B cell (primary cell): ENCODE measurements at regions of chr12 and their contacts with region 1.

Region 1: GRCh38 chr12:591167-592023 is 71.8 kb downstream of the NINJ2 start:
- DNase-seq: no peak
- ATAC-seq: peak; percentile 57
- H3K4me3 ChIP-seq: no peak overlapping the region
- H3K4me3 Mint-ChIP-seq: no peak overlapping the region
- H3K27ac ChIP-seq: no peak overlapping the region
- H3K27ac Mint-ChIP-seq: peak overlapping the region; percentile 4
- H3K4me1 ChIP-seq: peaks cover 5 to 16% of the 10 kb centered on the region in 2 donors
- H3K4me1 Mint-ChIP-seq: peaks cover 16% of the 10 kb centered on the region
- H3K27me3 ChIP-seq: peaks cover 0 to 5% (median 0%) of the 10 kb centered on the region in 4 experiments
- H3K27me3 Mint-ChIP-seq: no peaks in the 10 kb centered on the region
- CTCF ChIP-seq: no peak

Region 2: DNA sequence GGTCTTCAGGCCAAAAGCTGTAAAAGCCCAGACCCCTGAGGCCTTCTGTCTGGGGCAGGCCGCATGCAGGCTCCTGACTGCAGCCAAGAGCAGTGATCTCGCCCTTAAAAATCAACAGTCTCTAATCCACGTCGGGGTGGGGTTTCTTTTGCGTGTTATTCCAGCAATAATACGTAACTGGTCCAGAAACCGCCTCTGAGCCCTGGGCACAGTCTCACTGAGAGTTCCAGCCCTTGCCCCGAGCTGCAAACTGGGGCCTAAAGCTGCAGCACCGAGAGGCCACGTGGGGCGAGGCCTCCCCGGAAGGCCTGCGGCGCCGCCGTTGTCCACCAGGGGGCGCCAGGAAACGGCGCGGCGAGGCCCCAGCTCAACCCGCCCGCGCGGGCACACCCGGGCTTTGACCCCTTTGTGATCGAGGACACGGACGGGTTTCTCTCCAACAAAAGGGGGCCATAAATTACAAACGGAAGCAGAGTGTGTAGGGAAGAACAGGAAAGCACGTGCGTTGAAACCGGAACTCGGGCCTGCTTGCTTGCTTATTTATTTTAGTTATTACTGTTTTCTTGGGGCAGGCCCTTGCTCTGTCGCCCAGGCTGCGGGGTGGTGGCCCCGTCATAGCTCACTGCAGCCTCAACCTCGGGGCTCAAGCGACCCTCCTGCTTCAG is 15.3 kb before region 1 on chr12:
- CTCF ChIA-PET with region 1: interaction called, 11 read pairs
- POLR2A ChIA-PET with region 1: no interaction called
- intact Hi-C with region 1: no loop called
- DNase-seq: peak; percentile 88
- ATAC-seq: peak; percentile 99
- H3K4me3 ChIP-seq: peak overlapping the region in 4 of 5 experiments; percentile 20 to 34 (median 26)
- H3K4me3 Mint-ChIP-seq: peak overlapping the region; percentile 79
- H3K27ac ChIP-seq: no peak overlapping the region
- H3K27ac Mint-ChIP-seq: peak overlapping the region; percentile 65
- H3K4me1 ChIP-seq: peaks cover 8 to 12% of the 10 kb centered on the region in 2 donors
- H3K4me1 Mint-ChIP-seq: peaks cover 8% of the 10 kb centered on the region
- H3K27me3 ChIP-seq: no peaks in the 10 kb centered on the region
- H3K27me3 Mint-ChIP-seq: no peaks in the 10 kb centered on the region
- CTCF ChIP-seq: peak; percentile 97

Region 3: DNA sequence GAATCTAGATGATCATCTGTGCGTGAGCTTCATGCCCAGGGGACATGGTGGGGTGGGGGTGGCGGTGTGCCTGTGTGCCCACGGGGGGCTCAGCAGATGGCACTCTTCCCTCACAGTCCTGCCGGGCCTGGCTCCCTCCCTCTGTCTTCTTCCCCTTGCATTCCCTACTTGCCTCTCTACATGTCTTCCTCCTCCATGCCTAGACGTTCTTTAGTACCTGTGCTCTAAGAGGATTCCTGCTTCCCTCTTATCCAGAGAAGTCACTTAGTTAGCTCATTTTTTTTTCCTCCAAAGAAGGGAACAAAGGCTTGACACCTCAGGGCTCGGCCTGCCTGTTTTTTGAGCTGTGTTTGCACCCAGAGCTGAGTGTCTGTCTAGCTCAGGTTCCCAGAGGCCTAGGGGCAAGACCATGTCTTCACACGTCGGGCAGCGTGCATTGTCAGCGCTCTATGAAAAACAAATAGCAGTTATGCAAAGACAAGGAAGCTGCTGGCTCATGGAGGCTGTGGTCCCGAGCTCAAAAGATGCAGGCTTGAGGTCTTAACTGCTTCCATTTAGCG is 23.1 kb after region 1 on chr12:
- CTCF ChIA-PET with region 1: no interaction called
- POLR2A ChIA-PET with region 1: no interaction called
- intact Hi-C with region 1: no loop called
- DNase-seq: peak; percentile 62
- ATAC-seq: peak; percentile 68
- H3K4me3 ChIP-seq: no peak overlapping the region
- H3K4me3 Mint-ChIP-seq: no peak overlapping the region
- H3K27ac ChIP-seq: no peak overlapping the region
- H3K27ac Mint-ChIP-seq: no peak overlapping the region
- H3K4me1 ChIP-seq: peaks cover 20 to 21% of the 10 kb centered on the region in 2 donors
- H3K4me1 Mint-ChIP-seq: peaks cover 24% of the 10 kb centered on the region
- H3K27me3 ChIP-seq: no peaks in the 10 kb centered on the region
- H3K27me3 Mint-ChIP-seq: no peaks in the 10 kb centered on the region
- CTCF ChIP-seq: peak; percentile 45

Region 4: GRCh38 chr12:630656-631632 is 39.5 kb after region 1 on chr12:
- CTCF ChIA-PET with region 1: no interaction called
- POLR2A ChIA-PET with region 1: no interaction called
- intact Hi-C with region 1: no loop called
- DNase-seq: peak; percentile 51
- ATAC-seq: peak; percentile 82
- H3K4me3 ChIP-seq: peak overlapping the region; percentile 51 to 79 (median 66)
- H3K4me3 Mint-ChIP-seq: peak overlapping the region; percentile 80
- H3K27ac ChIP-seq: peak overlapping the region; percentile 83 to 93
- H3K27ac Mint-ChIP-seq: peak overlapping the region; percentile 91
- H3K4me1 ChIP-seq: peaks cover 4 to 32% of the 10 kb centered on the region in 2 donors
- H3K4me1 Mint-ChIP-seq: peaks cover 38% of the 10 kb centered on the region
- H3K27me3 ChIP-seq: no peaks in the 10 kb centered on the region
- H3K27me3 Mint-ChIP-seq: no peaks in the 10 kb centered on the region
- CTCF ChIP-seq: no peak